ENCODE measurements at regions of chr3 and their contacts with region 1.

Region 1: GRCh38 chr3:143956838-143957237 is 14.8 kb upstream of the DIPK2A start:
- DNase-seq: no peak
- ATAC-seq: no peak
- H3K4me3 Mint-ChIP-seq: no peak overlapping the region
- H3K27ac Mint-ChIP-seq: no peak overlapping the region
- H3K4me1 Mint-ChIP-seq: peaks cover 10% of the 10 kb centered on the region
- H3K27me3 Mint-ChIP-seq: peaks cover 11% of the 10 kb centered on the region
- CTCF ChIP-seq: no peak

Region 2: DNA sequence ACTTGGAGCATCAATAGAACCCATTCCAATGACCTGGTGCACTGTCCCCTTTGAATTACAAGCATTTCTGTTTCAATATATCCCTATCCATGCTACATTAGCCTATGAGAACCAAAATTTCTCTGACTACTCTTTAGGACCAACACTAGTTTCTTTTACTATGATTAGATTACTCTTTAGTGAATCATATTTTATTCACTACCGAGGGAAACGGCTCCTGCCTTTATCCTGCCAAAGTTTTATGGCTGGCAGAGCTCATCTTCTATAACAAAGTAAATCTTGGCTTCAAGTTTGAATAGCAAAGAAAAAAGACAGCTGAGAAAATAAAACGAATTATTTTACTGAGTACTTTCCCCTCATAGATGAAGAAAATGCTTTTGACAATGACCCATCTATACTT is 229.4 kb before region 1 on chr3:
- CTCF ChIA-PET with region 1: no interaction called
- POLR2A ChIA-PET with region 1: no interaction called
- intact Hi-C with region 1: no loop called
- DNase-seq: no peak
- ATAC-seq: no peak
- H3K4me3 Mint-ChIP-seq: no peak overlapping the region
- H3K27ac Mint-ChIP-seq: no peak overlapping the region
- H3K4me1 Mint-ChIP-seq: no peaks in the 10 kb centered on the region
- H3K27me3 Mint-ChIP-seq: no peaks in the 10 kb centered on the region
- CTCF ChIP-seq: no peak

Region 3: DNA sequence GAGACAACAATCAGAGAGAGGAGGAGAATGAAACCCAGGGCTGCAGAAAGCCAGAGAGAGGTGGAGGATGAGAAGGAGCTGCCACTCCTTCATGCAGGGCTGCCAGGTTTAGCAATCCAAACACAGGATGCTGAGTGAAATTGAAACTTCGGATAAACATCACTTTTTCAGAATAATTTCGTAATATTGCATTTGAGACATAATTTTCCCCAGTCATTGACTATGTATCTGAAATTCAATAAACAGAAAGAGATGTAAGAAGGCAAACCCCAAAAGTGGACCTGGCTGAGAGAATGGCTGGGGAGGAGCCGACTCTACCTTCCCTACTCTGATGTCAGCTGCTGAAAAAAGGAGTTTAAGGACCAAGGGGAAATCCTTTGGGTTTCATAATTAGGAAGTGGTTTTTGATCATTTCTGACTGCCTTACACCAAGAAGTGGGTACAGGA is 142.4 kb before region 1 on chr3:
- CTCF ChIA-PET with region 1: no interaction called
- POLR2A ChIA-PET with region 1: no interaction called
- intact Hi-C with region 1: no loop called
- DNase-seq: no peak
- ATAC-seq: peak; percentile 73
- H3K4me3 Mint-ChIP-seq: no peak overlapping the region
- H3K27ac Mint-ChIP-seq: peak overlapping the region; percentile 50
- H3K4me1 Mint-ChIP-seq: peaks cover 12% of the 10 kb centered on the region
- H3K27me3 Mint-ChIP-seq: no peaks in the 10 kb centered on the region
- CTCF ChIP-seq: no peak

Region 4: DNA sequence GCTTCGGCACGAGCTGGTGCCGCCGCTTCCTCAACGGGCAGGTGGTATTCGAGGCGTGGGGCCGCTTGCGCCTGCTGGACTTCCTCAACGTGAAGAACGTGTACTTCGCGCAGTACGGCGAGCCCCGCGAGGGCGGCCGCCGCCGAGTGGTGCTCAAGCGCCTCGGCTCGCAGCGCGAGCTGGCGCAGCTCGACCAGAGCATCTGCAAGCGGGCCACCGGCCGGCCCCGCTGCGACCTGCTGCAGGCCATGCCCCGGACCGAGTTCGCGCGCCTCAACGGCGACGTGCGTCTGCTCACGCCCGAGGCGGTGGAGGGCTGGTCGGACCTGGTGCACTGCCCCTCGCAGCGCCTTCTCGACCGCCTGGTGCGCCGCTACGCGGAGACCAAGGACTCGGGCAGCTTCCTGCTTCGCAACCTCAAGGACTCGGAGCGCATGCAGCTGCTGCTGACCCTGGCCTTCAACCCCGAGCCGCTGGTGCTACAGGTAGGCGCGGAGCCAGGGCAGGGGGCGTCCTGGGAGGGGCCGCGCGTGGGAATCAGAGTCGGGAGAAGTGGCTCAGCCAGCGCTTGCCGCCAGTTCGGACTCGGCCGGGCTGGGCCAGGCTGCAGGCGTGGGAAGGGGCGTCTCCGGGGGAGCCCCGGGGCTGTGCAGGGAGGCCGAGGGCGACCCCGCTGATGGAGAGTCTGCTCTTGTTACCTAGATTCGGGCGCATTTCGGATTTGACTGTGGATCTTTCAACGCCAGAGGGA is 15.8 kb after region 1 on chr3:
- CTCF ChIA-PET with region 1: interaction called, 12 read pairs
- POLR2A ChIA-PET with region 1: interaction called, 3 read pairs
- intact Hi-C with region 1: no loop called
- DNase-seq: peak; percentile 69
- ATAC-seq: peak; percentile 4
- H3K4me3 Mint-ChIP-seq: peak overlapping the region; percentile 89
- H3K27ac Mint-ChIP-seq: peak overlapping the region; percentile 95
- H3K4me1 Mint-ChIP-seq: peaks cover 25% of the 10 kb centered on the region
- H3K27me3 Mint-ChIP-seq: peaks cover 4% of the 10 kb centered on the region
- CTCF ChIP-seq: peak; percentile 59

Region 5: DNA sequence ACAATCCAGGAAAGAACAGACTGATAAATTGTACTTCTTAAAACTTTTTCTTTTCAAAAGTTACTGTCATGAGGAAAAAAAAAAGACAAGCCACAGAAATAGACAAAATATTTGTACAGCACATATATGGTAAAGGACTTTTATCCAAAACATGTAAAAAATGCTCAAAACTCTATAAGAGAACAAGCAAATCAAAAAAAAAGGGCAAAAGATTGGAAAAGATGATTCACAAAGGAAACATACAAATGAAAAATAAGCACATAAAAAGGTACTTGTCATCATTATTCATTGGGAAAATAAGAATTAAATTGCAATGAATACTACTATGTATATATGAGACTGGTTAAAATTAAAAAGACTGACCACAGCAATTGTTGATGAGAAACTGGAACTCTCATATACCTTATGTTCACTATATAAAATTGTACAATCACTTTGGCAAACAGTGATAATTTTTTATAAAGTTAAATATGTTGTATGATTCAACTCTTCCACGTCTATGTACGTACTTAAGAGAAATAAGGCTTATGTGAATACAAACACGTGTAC is 54.5 kb after region 1 on chr3:
- CTCF ChIA-PET with region 1: no interaction called
- POLR2A ChIA-PET with region 1: no interaction called
- intact Hi-C with region 1: no loop called
- DNase-seq: no peak
- ATAC-seq: no peak
- H3K4me3 Mint-ChIP-seq: no peak overlapping the region
- H3K27ac Mint-ChIP-seq: no peak overlapping the region
- H3K4me1 Mint-ChIP-seq: no peaks in the 10 kb centered on the region
- H3K27me3 Mint-ChIP-seq: no peaks in the 10 kb centered on the region
- CTCF ChIP-seq: no peak